HCT116 (cell line): ENCODE measurements at regions of chr10 and their contacts with region 1.

Region 1: GRCh38 chr10:69885379-69886013 is 83.8 kb downstream of the COL13A1 start:
- DNase-seq: no peak
- ATAC-seq: peak; percentile 63
- H3K4me3 ChIP-seq: no peak overlapping the region
- H3K27ac ChIP-seq: no peak overlapping the region
- H3K4me1 ChIP-seq: peaks cover 0 to 3% of the 10 kb centered on the region in 2 experiments; a peak in 1 of 4 replicates
- H3K27me3 ChIP-seq: no peaks in the 10 kb centered on the region
- CTCF ChIP-seq: peak in 2 of 3 experiments; percentile 44 to 54; a peak in 4 of 6 replicates
- POLR2A ChIP-seq: no peak
- RAD21 ChIP-seq: no peak

Region 2: DNA sequence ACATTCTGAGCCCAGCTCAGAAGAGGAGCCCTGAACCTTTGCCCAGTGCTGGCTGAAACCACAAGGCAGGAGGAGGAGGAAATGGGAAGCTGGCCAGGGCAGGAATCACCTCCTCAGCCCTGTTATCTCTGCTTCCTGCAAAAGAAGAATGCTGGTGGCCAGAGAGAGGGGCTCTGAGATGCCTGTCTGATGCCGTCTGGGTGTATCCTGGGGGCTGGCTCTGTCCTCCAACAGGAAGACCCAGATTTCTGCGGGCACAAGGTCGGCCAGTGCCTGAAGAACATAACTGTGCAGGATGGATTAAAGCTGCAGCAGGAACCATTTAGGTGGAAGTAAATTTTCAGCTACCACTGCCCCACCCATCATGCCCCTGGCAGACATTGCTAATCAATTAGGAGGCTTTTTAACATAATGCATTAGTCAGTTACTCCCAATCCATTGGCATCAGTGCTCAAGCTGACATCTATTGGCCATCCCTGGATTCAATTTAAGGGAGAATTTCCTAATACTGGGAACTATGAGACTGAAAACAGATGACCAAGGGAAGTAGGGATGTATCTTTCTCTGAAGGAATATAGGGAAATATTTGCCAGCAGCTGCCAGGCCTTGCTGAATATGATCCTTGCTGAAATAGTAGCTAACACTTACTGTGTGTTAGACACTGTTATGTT is 16.1 kb before region 1 on chr10:
- CTCF ChIA-PET with region 1: interaction called, 11 read pairs
- POLR2A ChIA-PET with region 1: no interaction called
- RAD21 ChIA-PET with region 1: no interaction called
- intact Hi-C with region 1: no loop called
- DNase-seq: peak; percentile 56
- ATAC-seq: peak; percentile 65
- H3K4me3 ChIP-seq: peak overlapping the region; percentile 34 to 46
- H3K27ac ChIP-seq: peak overlapping the region; percentile 21
- H3K4me1 ChIP-seq: peaks cover 6 to 55% of the 10 kb centered on the region in 2 experiments; a peak in 2 of 4 replicates
- H3K27me3 ChIP-seq: no peaks in the 10 kb centered on the region
- CTCF ChIP-seq: no peak
- POLR2A ChIP-seq: no peak
- RAD21 ChIP-seq: no peak; the same call in 1 of the 2 replicates

Region 3: GRCh38 chr10:70125918-70126552 is 240.5 kb after region 1 on chr10:
- CTCF ChIA-PET with region 1: no interaction called
- POLR2A ChIA-PET with region 1: no interaction called
- RAD21 ChIA-PET with region 1: no interaction called
- intact Hi-C with region 1: no loop called
- DNase-seq: no peak
- ATAC-seq: no peak
- H3K4me3 ChIP-seq: no peak overlapping the region
- H3K27ac ChIP-seq: no peak overlapping the region
- H3K4me1 ChIP-seq: peaks cover 4 to 11% of the 10 kb centered on the region in 2 experiments
- H3K27me3 ChIP-seq: no peaks in the 10 kb centered on the region
- CTCF ChIP-seq: no peak
- POLR2A ChIP-seq: no peak
- RAD21 ChIP-seq: no peak